ENCODE measurements at regions of chr4 and their contacts with region 1.

Region 1: GRCh38 chr4:152039023-152039481 is 278.2 kb upstream of the GATB start:
- DNase-seq: no peak
- ATAC-seq: no peak
- H3K4me3 ChIP-seq: no peak overlapping the region
- H3K27ac ChIP-seq: peak overlapping the region in 1 of 2 donors; percentile 12
- H3K4me1 ChIP-seq: no peaks in the 10 kb centered on the region
- H3K27me3 ChIP-seq: no peaks in the 10 kb centered on the region

Region 2: DNA sequence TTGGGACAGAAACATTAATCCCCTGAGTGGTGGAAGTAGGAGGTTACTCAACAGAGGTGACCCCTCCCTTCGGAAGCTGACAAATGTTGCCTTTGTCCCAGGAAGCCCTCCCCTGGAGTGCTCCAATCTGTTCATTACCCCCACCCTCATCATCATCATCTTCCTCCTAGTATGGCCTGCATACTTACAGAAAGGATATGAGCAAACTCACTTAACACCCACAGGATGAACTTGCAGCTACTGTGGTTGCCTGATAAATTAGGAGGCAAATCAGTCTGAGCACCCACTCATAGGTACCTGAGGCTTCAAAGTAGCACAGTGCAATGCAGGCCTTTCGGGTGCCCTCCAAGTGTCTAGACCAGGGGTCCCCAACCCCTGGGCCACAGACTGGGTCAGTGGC is 41.6 kb before region 1 on chr4:
- intact Hi-C with region 1: loop called in 1 of 2 experiments (anchors 5 kb)
- DNase-seq: no peak
- ATAC-seq: no peak
- H3K4me3 ChIP-seq: no peak overlapping the region
- H3K27ac ChIP-seq: no peak overlapping the region
- H3K4me1 ChIP-seq: peaks cover 2 to 3% of the 10 kb centered on the region in 2 donors
- H3K27me3 ChIP-seq: no peaks in the 10 kb centered on the region

Region 3: GRCh38 chr4:152052451-152053057 is 13.5 kb after region 1 on chr4:
- intact Hi-C with region 1: no loop called
- DNase-seq: no peak
- ATAC-seq: no peak
- H3K4me3 ChIP-seq: no peak overlapping the region
- H3K27ac ChIP-seq: no peak overlapping the region
- H3K4me1 ChIP-seq: no peaks in the 10 kb centered on the region
- H3K27me3 ChIP-seq: no peaks in the 10 kb centered on the region

Region 4: DNA sequence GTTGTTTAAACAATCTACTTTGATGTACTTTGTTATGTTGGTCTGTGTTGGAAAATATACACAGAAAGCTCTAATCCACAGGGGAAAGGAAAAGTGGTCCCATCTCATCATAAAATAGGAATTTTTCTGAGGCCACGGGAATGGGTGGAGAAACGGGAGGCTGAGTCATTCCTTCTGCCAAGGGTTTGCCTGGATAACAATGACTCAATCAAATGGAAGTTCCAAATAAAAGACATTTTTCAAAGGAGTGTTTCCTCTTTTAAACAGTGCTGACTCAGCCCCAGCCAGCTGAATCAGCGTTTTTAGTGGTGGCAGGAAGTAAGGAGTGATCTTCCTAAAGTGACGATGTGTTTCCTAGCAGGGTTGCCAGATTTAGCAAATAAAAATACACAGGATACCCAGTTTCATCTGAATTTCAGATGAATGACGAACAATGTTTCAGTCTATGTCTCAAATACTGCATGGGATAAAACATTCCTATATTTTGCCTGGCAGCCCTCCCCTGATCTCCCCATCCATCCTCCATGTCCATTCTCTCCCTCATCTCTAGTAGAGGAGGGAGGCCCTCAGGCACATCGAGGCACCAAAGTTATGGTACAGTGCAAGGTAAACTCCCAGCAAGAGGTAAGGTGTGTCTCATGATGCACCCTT is 67.2 kb after region 1 on chr4:
- intact Hi-C with region 1: loop called in 1 of 2 experiments (anchors 5 kb)
- DNase-seq: peak; percentile 86 to 94
- ATAC-seq: peak; percentile 81
- H3K4me3 ChIP-seq: no peak overlapping the region
- H3K27ac ChIP-seq: no peak overlapping the region
- H3K4me1 ChIP-seq: peaks cover 0 to 5% of the 10 kb centered on the region in 2 donors
- H3K27me3 ChIP-seq: no peaks in the 10 kb centered on the region

Measured in aorta (tissue), 5 donors.